ENCODE measurements at regions of chr3 and their contacts with region 1.

Region 1: GRCh38 chr3:38346587-38347410 is at the start of gene XYLB:
- DNase-seq: peak; percentile 84
- H3K4me3 Mint-ChIP-seq: peak within 1 kb of the TSS; percentile 71
- H3K27ac Mint-ChIP-seq: no peak within 1 kb of the TSS
- H3K4me1 Mint-ChIP-seq: peaks cover 23% of the 10 kb centered on the region
- H3K27me3 Mint-ChIP-seq: peaks cover 7% of the 10 kb centered on the region
- total RNA-seq, gene XYLB: 3.1 to 3.2 TPM

Region 2: DNA sequence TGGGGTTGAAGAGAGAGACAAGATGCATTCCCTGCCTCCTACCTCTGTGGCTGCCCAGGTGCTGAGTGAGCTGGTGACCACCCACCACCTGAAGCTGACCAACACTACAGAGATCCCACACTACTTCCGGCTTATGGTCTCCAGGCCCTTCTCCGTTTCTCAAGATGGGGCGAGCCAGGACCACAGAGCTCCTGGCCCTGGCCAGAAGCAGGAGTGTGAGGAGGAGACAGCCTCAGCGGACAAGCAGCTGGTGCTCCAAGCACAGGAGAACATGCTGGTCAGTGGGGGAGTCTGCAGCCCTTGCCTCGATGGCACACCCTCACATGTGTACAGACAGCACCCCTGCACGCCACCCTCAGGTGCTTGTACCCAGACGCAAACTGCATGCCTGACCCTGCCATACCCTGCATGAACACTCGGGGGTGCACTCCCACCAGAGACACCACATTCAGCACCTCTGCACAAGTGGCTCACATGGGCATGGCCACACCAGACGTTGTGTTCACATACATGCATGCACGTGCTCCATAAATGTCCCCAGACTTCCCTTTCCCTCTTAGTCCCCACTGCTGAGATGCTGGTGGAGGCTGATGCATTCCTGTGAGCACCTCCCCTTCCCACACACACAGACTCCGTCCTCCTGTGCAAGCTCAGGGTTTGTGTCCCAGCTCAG is 228.9 kb before region 1 on chr3:
- CTCF ChIA-PET with region 1: interaction called, 29 read pairs
- POLR2A ChIA-PET with region 1: no interaction called
- DNase-seq: peak; percentile 81
- H3K4me3 Mint-ChIP-seq: no peak overlapping the region
- H3K27ac Mint-ChIP-seq: no peak overlapping the region
- H3K4me1 Mint-ChIP-seq: peaks cover 3% of the 10 kb centered on the region
- H3K27me3 Mint-ChIP-seq: no peaks in the 10 kb centered on the region

Region 3: GRCh38 chr3:38421679-38422336 is 75.0 kb after region 1 on chr3:
- CTCF ChIA-PET with region 1: interaction called, 17 read pairs
- POLR2A ChIA-PET with region 1: interaction called, 5 read pairs
- DNase-seq: no peak
- H3K4me3 Mint-ChIP-seq: no peak overlapping the region
- H3K27ac Mint-ChIP-seq: no peak overlapping the region
- H3K4me1 Mint-ChIP-seq: peaks cover 29% of the 10 kb centered on the region
- H3K27me3 Mint-ChIP-seq: no peaks in the 10 kb centered on the region

Region 4: DNA sequence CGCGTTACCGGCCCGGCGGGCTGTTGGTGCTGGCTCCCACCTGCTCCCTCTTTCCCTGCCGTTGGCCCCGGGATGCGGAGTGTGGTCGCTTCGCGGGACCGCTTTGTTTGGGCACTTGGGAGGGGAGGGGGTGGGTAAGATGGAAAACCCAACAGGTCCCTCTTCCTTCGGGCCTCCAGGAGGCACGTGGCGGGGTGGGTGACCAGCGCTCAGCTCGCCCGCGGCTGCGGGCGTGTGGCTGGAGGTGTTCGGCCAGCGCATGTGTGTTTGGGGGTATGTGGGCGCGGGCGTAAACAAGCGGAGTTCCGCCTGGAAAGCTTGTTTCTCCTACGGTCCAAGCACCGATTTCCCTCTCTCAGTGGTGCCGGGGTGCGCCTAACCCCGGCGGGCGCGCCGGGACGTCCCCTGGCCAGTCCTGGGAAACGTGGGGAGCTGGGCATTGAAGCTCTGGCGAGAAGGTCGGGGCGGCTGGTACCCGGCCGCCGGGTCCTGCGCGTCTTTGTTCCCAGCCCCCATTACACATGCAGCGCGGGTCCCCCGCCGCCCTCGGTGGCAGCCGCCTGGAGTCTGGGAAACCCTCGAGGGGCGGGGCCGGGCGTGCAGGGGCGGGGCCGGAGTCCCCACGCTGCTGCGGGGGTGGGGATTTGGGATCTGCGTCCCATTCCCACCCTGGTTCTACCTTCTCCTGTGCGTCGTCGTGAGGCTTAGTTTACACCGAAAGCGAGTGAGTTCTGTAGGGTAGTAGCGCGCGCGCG is 108.3 kb after region 1 on chr3:
- CTCF ChIA-PET with region 1: interaction called, 12 read pairs
- POLR2A ChIA-PET with region 1: interaction called, 3 read pairs
- DNase-seq: peak; percentile 58
- H3K4me3 Mint-ChIP-seq: peak overlapping the region; percentile 91
- H3K27ac Mint-ChIP-seq: no peak overlapping the region
- H3K4me1 Mint-ChIP-seq: peaks cover 13% of the 10 kb centered on the region
- H3K27me3 Mint-ChIP-seq: peaks cover 13% of the 10 kb centered on the region

Region 5: DNA sequence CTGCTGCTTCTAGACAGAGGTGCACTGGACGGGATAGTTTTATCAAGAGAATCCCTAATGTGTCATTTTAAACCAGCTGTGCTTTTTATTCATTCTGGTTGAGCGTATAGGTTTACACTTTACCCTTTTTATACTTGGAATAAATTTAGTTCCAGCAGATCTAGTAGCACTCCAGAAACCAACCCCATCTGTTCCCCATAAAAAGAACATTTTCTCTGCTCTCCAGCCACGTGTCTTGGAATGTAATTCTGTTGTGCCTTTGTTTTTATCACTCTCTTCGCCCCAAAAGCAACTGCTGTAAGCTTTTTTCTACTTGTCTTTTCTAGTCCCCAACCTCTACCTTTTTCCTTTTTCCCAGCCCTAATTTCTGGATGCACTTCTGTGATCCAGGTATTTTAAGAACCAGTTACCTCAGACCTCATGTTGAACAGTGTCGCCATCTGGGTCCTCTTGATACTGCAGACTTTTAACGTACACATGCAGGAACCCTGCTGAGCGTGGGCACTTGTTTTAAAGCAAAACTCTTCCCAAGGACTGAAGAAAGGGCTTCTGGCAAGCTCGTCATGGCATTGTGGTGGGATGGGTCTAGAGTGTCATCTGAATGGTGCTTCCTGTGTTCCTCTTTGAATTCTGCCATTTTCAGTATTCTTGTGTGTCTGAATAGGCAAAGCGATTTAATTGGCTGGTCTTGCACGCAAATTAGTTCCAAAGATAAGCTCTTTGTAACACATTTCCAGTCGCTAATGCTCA is 143.7 kb after region 1 on chr3:
- CTCF ChIA-PET with region 1: interaction called, 11 read pairs
- POLR2A ChIA-PET with region 1: no interaction called
- DNase-seq: no peak
- H3K4me3 Mint-ChIP-seq: no peak overlapping the region
- H3K27ac Mint-ChIP-seq: no peak overlapping the region
- H3K4me1 Mint-ChIP-seq: peaks cover 2% of the 10 kb centered on the region
- H3K27me3 Mint-ChIP-seq: no peaks in the 10 kb centered on the region

Measured in activated CD4-positive, alpha-beta memory T cell treated with anti-CD3 and anti-CD28 coated beads, Interleukin-2, amount 10 ng/mL, durations not matched to agents 7 days and 5 days (primary cell).